ENCODE measurements at regions of chr2 and their contacts with region 1.

Region 1: DNA sequence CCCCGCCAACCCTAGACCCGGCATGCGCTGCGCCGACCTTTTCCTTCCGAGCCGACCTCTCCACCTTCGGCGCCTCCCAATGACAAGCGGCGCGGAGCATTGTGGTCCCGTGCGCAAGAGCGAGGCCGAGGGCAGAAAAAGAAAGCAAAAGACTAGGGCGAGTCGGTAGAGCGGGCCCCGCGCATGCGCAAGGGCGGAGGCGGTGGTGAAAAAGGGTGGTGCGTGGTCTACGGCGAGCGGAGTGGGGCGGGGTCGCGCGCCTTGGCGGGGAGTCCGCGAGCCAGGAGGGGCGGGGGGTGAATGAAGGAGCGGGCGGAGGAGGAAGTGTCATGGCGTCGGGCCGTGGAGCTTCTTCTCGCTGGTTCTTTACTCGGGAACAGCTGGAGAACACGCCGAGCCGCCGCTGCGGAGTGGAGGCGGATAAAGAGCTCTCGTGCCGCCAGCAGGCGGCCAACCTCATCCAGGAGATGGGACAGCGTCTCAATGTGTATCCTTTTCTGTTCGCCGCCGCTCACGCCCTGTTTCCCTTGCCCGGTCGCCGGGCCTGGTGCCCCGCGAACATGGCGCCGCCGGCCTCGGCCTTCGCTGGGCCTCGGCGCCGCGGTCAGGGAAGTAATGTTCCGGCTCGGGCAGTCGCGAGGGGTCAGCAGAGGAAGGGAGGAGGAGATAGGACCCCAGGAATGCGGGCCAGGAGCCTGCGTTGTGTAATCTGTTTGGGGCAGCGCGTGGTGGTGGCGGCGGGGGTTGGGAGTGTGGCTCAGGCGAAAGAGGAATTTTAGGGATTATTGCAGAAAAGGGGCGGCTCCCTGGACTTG is at the start of gene CCNT2:
- DNase-seq: peak; percentile 99 to 100
- ATAC-seq: peak; percentile 81 to 93 (median 82)
- H3K4me3 ChIP-seq: peak within 1 kb of the TSS; percentile 92
- H3K4me3 Mint-ChIP-seq: peak within 1 kb of the TSS; percentile 99
- H3K27ac ChIP-seq: peak within 1 kb of the TSS; percentile 98
- H3K27ac Mint-ChIP-seq: peak within 1 kb of the TSS; percentile 93 to 100
- H3K4me1 ChIP-seq: peaks cover 22% of the 10 kb centered on the region
- H3K4me1 Mint-ChIP-seq: peaks cover 46 to 56% of the 10 kb centered on the region in 2 donors
- H3K27me3 ChIP-seq: no peaks in the 10 kb centered on the region
- H3K27me3 Mint-ChIP-seq: peaks cover 4 to 9% of the 10 kb centered on the region in 2 donors
- CTCF ChIP-seq: no peak
- total RNA-seq, gene CCNT2: 86.9 to 93.1 (median 87.8) TPM

Region 2: GRCh38 chr2:134301099-134301927 is 617.4 kb before region 1 on chr2:
- intact Hi-C with region 1: no loop called
- DNase-seq: no peak
- ATAC-seq: no peak
- H3K4me3 ChIP-seq: no peak overlapping the region
- H3K4me3 Mint-ChIP-seq: no peak overlapping the region
- H3K27ac ChIP-seq: no peak overlapping the region
- H3K27ac Mint-ChIP-seq: no peak overlapping the region
- H3K4me1 ChIP-seq: no peaks in the 10 kb centered on the region
- H3K4me1 Mint-ChIP-seq: peaks cover 20 to 25% of the 10 kb centered on the region in 2 donors
- H3K27me3 ChIP-seq: no peaks in the 10 kb centered on the region
- H3K27me3 Mint-ChIP-seq: peaks cover 0 to 4% of the 10 kb centered on the region in 2 donors
- CTCF ChIP-seq: no peak

Region 3: GRCh38 chr2:135741395-135742324 is 822.9 kb after region 1 on chr2 and contains the start of gene UBXN4:
- intact Hi-C with region 1: loop called (anchors 1 kb)
- DNase-seq: peak; percentile 84 to 98
- ATAC-seq: peak; percentile 86 to 97 (median 90)
- H3K4me3 ChIP-seq: peak within 1 kb of the TSS; percentile 100
- H3K4me3 Mint-ChIP-seq: peak within 1 kb of the TSS; percentile 95
- H3K27ac ChIP-seq: peak within 1 kb of the TSS; percentile 100
- H3K27ac Mint-ChIP-seq: peak within 1 kb of the TSS; percentile 95 to 96
- H3K4me1 ChIP-seq: no peaks in the 10 kb centered on the region
- H3K4me1 Mint-ChIP-seq: peaks cover 34 to 41% of the 10 kb centered on the region in 2 donors
- H3K27me3 ChIP-seq: no peaks in the 10 kb centered on the region
- H3K27me3 Mint-ChIP-seq: no peaks in the 10 kb centered on the region
- CTCF ChIP-seq: peak; percentile 22
- total RNA-seq, gene UBXN4: 129 to 153 (median 150) TPM

Measured in natural killer cell (primary cell).